ENCODE measurements at regions of chr13 and their contacts with region 1.

Region 1: DNA sequence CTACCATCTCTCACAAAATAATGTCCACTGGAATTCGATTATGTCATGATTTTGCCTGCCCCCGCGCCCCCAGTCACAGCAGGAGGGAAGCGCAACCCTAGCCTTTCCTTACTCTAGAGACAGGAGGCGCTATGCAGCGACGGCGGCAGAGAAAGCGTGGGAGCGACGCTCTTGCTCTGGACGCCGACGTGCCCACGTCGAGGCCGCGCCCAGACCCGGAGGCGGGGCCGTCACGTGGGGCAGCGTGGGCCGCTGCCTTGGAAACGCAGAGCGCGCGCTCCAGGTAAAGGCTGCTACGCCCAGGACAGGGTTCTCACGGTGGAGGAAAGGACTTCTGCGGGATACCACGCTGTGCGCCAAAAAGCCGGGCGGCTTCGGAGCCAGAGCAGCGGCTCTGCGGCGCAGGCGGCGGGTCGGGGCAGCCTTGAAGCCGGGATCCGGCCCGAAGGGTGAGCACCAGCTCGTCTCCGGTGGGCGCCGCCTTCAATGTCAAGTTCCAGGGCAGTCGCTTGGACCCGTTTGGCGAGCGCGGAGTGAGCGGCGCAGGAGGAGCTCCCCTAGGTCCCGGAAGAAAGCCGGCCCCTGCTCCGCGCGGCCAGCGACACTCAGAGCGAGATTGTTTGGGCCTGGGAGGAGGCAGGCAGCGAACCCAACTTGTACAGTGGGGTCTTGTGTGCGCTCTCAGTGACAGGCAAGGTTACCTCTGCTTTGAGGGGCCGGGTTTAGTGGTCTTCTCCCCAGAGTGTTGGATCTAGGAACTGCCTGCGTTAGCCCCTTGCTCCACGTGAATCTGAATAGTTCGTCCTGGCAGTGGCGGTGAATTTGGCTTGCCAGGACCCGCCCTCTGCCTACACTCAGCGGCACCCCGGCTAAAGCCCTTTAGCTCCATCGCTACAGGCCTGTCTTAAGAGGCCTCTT is 121.7 kb downstream of the MRPL57 start:
- DNase-seq: peak; percentile 84
- ATAC-seq: peak; percentile 97
- H3K4me3 Mint-ChIP-seq: peak overlapping the region; percentile 89
- H3K27ac Mint-ChIP-seq: peak overlapping the region; percentile 77
- H3K4me1 Mint-ChIP-seq: peaks cover 18% of the 10 kb centered on the region
- H3K27me3 Mint-ChIP-seq: no peaks in the 10 kb centered on the region
- CTCF ChIP-seq: no peak

Region 2: GRCh38 chr13:19959831-19960652 is 1338.1 kb before region 1 on chr13:
- CTCF ChIA-PET with region 1: no interaction called
- POLR2A ChIA-PET with region 1: no interaction called
- intact Hi-C with region 1: loop called (anchors 5 kb)
- DNase-seq: peak; percentile 60
- ATAC-seq: peak; percentile 43
- H3K4me3 Mint-ChIP-seq: peak overlapping the region; percentile 98
- H3K27ac Mint-ChIP-seq: peak overlapping the region; percentile 98
- H3K4me1 Mint-ChIP-seq: peaks cover 33% of the 10 kb centered on the region
- H3K27me3 Mint-ChIP-seq: no peaks in the 10 kb centered on the region
- CTCF ChIP-seq: no peak

Region 3: DNA sequence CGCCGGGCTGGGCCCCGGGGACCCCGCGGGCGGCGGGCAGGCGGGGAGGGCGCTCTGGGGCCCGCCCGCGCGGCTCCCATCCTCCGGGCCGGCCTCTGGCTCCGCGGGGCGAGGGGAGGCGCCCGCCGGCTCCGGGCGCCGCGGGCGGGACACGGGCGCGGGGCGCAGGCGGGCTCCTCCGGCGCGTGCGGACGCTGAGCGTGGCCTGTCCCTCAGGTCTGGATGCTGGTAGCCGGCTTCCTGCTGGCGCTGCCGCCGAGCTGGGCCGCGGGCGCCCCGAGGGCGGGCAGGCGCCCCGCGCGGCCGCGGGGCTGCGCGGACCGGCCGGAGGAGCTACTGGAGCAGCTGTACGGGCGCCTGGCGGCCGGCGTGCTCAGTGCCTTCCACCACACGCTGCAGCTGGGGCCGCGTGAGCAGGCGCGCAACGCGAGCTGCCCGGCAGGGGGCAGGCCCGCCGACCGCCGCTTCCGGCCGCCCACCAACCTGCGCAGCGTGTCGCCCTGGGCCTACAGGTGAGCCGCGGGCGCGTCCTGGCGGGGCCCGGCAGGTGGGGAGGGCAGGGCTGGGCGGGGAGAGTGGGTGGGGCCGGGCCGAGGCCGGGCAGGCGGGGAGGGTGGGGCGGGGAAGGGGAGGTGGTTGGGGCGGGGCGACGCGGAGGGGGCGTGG is 594.3 kb before region 1 on chr13:
- CTCF ChIA-PET with region 1: no interaction called
- POLR2A ChIA-PET with region 1: no interaction called
- intact Hi-C with region 1: loop called (anchors 10 kb)
- DNase-seq: peak; percentile 72
- ATAC-seq: peak; percentile 93
- H3K4me3 Mint-ChIP-seq: no peak overlapping the region
- H3K27ac Mint-ChIP-seq: no peak overlapping the region
- H3K4me1 Mint-ChIP-seq: peaks cover 14% of the 10 kb centered on the region
- H3K27me3 Mint-ChIP-seq: peaks cover 19% of the 10 kb centered on the region
- CTCF ChIP-seq: no peak

Region 4: DNA sequence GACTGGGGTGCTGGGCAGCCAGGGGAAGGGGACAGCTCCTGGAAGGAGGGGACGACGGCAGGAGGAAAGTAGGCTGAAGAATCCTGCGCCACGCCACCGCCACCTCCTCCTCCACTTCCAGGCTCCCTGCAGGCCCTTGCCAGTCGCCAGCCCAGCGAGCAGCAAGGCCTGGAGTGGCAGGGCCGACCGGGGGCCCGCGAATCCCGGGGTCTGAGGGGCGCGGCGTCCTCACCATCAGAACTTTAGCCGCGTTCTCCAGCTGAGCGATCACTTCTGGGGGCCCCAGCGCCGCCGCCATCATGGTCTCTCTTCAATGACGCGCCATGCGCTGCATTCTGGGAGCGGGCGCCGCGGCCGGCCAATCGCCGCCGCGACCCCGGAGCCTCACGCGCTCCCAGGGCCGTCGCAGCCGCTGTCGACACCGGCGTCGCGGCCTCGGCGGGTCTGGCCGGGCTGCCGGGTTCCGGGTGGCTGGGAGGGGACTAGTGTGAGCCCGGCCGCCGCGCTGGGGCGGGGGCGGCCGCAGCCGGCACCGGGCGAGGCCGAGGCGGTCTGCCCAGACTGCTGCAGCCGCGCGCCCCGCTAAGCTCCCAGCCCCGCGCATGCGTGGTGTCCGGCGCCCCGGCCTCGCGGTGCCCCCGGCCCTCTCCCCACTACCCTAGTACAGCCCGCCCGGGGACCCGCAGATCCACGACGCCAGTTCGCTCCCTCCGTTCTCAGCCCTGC is 395.6 kb before region 1 on chr13 and contains the start of gene XPO4:
- CTCF ChIA-PET with region 1: no interaction called
- POLR2A ChIA-PET with region 1: no interaction called
- intact Hi-C with region 1: loop called (anchors 2 kb)
- DNase-seq: peak; percentile 80
- ATAC-seq: peak; percentile 93
- H3K4me3 Mint-ChIP-seq: peak within 1 kb of the TSS; percentile 91
- H3K27ac Mint-ChIP-seq: peak within 1 kb of the TSS; percentile 86
- H3K4me1 Mint-ChIP-seq: peaks cover 32% of the 10 kb centered on the region
- H3K27me3 Mint-ChIP-seq: peaks cover 2% of the 10 kb centered on the region
- CTCF ChIP-seq: no peak
- total RNA-seq, gene XPO4: 25.2 and 27.4 TPM in 2 replicates

Region 5: GRCh38 chr13:21111546-21111945 is 186.6 kb before region 1 on chr13:
- CTCF ChIA-PET with region 1: no interaction called
- POLR2A ChIA-PET with region 1: no interaction called
- intact Hi-C with region 1: loop called (anchors 2 kb)
- DNase-seq: no peak
- ATAC-seq: no peak
- H3K4me3 Mint-ChIP-seq: no peak overlapping the region
- H3K27ac Mint-ChIP-seq: no peak overlapping the region
- H3K4me1 Mint-ChIP-seq: no peaks in the 10 kb centered on the region
- H3K27me3 Mint-ChIP-seq: peaks cover 2% of the 10 kb centered on the region
- CTCF ChIP-seq: no peak

Region 6: DNA sequence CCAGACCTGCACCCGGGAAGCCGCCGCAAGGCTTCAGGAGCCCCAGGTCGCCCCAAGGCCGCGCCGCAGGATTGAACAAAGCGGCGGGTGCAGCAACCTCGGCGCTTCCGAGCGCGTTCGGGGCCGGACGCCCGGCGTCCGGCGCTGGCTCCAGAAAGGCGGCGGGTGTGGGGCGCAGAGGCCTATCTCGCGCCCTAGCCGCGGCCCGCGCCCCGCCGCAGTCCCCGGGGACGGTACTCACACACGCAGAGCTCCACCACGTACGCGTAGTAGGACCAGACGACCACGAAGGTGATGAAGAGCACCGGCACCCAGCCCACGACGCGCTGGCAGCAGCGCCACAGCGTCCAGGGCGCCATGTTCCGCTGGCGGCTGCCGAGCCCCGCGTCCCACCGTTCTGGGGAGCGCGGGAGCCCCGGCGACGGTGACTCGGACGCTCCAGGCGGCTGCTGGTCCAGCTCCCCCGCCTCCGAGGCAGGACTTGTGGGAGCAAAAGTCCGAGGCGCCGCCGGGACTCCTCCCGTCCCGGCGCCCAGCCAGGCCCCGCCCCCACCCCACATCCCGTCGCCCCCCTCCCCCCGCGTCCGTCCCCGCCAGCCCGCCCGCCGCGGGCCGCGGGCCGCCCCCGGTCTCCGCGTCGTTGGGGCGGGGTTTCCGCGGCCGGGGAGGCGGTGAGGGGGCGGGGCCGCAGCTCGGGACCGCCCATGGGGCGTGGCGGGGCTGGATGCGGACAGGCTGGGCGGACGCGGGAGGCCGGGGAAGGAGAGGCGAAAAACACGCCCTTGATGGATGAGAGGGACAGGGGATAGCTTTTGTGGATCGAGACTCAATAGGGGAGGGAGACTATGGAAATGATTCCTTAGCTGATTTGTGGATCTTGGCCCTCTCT is 160.9 kb after region 1 on chr13 and contains the start of gene ZDHHC20:
- CTCF ChIA-PET with region 1: interaction called, 12 read pairs
- POLR2A ChIA-PET with region 1: interaction called, 15 read pairs
- intact Hi-C with region 1: loop called (anchors 1 kb)
- DNase-seq: peak; percentile 98
- ATAC-seq: peak; percentile 91
- H3K4me3 Mint-ChIP-seq: peak within 1 kb of the TSS; percentile 90
- H3K27ac Mint-ChIP-seq: peak within 1 kb of the TSS; percentile 86
- H3K4me1 Mint-ChIP-seq: peaks cover 36% of the 10 kb centered on the region
- H3K27me3 Mint-ChIP-seq: no peaks in the 10 kb centered on the region
- CTCF ChIP-seq: no peak
- total RNA-seq, gene ZDHHC20: 45.0 and 49.2 TPM in 2 replicates

Region 7: GRCh38 chr13:21670883-21671619 is 372.9 kb after region 1 on chr13 and contains the start of gene FGF9:
- CTCF ChIA-PET with region 1: no interaction called
- POLR2A ChIA-PET with region 1: no interaction called
- intact Hi-C with region 1: loop called (anchors 10 kb)
- DNase-seq: peak; percentile 76
- ATAC-seq: peak; percentile 77
- H3K4me3 Mint-ChIP-seq: peak within 1 kb of the TSS; percentile 85
- H3K27ac Mint-ChIP-seq: peak within 1 kb of the TSS; percentile 61
- H3K4me1 Mint-ChIP-seq: peaks cover 48% of the 10 kb centered on the region
- H3K27me3 Mint-ChIP-seq: peaks cover 43% of the 10 kb centered on the region
- CTCF ChIP-seq: no peak
- total RNA-seq, gene FGF9: 0.22 and 0.49 TPM in 2 replicates

Measured in activated B cell treated with CpG ODN at 0.5 μM for 24 hours (primary cell).